CD8-positive, alpha-beta memory T cell (primary cell): ENCODE measurements at regions of chr7 and their contacts with region 1.

Region 1: DNA sequence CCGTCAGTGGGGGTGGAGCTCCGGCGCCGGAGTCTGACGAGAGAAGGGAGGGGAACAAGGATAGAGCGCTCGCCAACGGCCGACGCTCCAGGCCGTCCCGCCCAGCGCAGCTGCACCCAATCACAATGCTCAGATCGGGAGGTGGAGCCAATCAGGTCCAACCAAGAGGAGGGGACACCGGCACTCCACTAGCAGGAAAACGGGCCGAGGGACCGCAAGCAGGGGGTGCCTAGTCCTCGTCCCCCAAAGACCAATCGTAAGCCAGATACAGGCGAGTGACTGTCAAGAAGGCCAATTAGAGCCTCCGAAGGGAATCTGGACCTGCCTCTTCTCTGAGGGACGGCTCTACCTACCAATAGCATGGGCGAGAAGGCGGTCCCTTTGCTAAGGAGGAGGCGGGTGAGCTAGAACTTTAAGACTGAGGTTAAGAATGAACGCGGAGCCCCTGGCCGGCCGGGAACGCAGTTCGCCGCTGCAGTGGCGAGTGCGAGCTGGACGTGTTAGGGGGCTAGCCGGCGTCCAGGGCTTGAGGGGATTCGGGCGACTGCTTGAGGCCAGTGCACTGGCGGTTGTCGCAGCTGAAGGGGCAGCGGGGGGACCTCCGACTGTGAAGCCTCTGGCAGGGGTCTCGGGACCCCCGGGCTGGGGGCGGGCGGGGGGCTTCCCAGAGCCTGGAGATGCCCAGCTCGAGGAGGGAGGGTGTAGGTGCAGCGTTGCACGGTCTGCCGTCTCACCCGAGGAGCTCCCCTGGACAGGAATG is at the start of gene FBXO24:
- DNase-seq: peak; percentile 99 to 100 (median 99)
- H3K4me3 ChIP-seq: peak within 1 kb of the TSS; percentile 87
- H3K4me3 Mint-ChIP-seq: peak within 1 kb of the TSS; percentile 91 to 99 (median 98)
- H3K27ac ChIP-seq: peak within 1 kb of the TSS; percentile 92
- H3K27ac Mint-ChIP-seq: peak within 1 kb of the TSS; percentile 85 to 99 (median 95)
- H3K4me1 ChIP-seq: peaks cover 40% of the 10 kb centered on the region
- H3K4me1 Mint-ChIP-seq: peaks cover 30 to 53% (median 31%) of the 10 kb centered on the region in 3 donors
- H3K27me3 ChIP-seq: no peaks in the 10 kb centered on the region
- H3K27me3 Mint-ChIP-seq: peaks cover 6 to 8% of the 10 kb centered on the region in 2 donors
- total RNA-seq, gene FBXO24: 0.47 to 0.50 TPM

Region 2: DNA sequence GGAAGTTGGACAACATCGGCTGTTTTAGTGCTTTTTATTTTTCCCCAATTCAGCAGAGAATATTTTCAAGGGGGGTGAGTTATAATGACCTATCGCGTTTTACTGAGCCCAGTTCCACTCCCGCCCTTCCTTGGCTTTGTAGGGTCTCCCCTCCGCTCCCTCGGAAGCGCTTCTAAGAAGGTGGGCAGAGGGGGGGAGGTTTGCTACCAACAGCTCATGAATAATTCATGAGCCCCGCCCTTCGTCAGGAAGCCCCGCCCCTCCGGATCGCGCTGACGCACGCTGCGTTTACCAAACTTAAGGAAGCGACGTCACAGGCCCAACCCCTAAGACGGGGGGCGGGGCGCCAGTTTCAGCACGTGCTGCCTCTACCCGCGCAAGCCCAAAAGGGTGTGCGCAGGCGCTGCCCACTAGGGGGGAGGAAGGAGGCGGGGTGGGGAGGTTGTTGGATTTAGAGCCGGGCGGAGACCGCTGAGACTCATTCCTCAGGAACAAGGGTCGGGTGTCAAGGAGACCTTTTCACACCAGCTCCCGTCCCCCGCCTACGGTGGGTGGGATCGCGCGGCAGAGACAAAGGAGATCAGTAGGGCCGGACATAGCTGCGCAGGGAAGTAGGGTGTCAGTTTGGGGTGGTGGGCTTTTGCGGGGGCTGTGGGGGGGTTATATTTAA is 157.3 kb before region 1 on chr7:
- CTCF ChIA-PET with region 1: interaction called, 5 read pairs
- POLR2A ChIA-PET with region 1: interaction called, 27 read pairs
- DNase-seq: peak; percentile 100
- H3K4me3 ChIP-seq: peak overlapping the region; percentile 96
- H3K4me3 Mint-ChIP-seq: peak overlapping the region; percentile 96 to 100 (median 98)
- H3K27ac ChIP-seq: peak overlapping the region; percentile 100
- H3K27ac Mint-ChIP-seq: peak overlapping the region; percentile 94 to 100 (median 100)
- H3K4me1 ChIP-seq: peaks cover 34% of the 10 kb centered on the region
- H3K4me1 Mint-ChIP-seq: peaks cover 31 to 56% (median 35%) of the 10 kb centered on the region in 3 donors
- H3K27me3 ChIP-seq: no peaks in the 10 kb centered on the region
- H3K27me3 Mint-ChIP-seq: peaks cover 0 to 13% of the 10 kb centered on the region in 2 donors

Region 3: GRCh38 chr7:100469227-100470044 is 117.0 kb before region 1 on chr7:
- CTCF ChIA-PET with region 1: interaction called, 19 read pairs
- POLR2A ChIA-PET with region 1: no interaction called
- DNase-seq: peak; percentile 69 to 86 (median 80)
- H3K4me3 ChIP-seq: no peak overlapping the region
- H3K4me3 Mint-ChIP-seq: no peak overlapping the region
- H3K27ac ChIP-seq: no peak overlapping the region
- H3K27ac Mint-ChIP-seq: peak overlapping the region in 7 of 8 donors; percentile 64 to 83 (median 70)
- H3K4me1 ChIP-seq: peaks cover 24% of the 10 kb centered on the region
- H3K4me1 Mint-ChIP-seq: peaks cover 17 to 46% (median 31%) of the 10 kb centered on the region in 3 donors
- H3K27me3 ChIP-seq: no peaks in the 10 kb centered on the region
- H3K27me3 Mint-ChIP-seq: no peaks in the 10 kb centered on the region

Region 4: GRCh38 chr7:100563809-100564400 is 22.5 kb before region 1 on chr7:
- CTCF ChIA-PET with region 1: interaction called, 133 read pairs
- POLR2A ChIA-PET with region 1: interaction called, 10 read pairs
- DNase-seq: peak; percentile 68 to 88 (median 77)
- H3K4me3 ChIP-seq: no peak overlapping the region
- H3K4me3 Mint-ChIP-seq: no peak overlapping the region
- H3K27ac ChIP-seq: no peak overlapping the region
- H3K27ac Mint-ChIP-seq: peak overlapping the region in 4 of 8 donors; percentile 40 to 88 (median 66)
- H3K4me1 ChIP-seq: peaks cover 33% of the 10 kb centered on the region
- H3K4me1 Mint-ChIP-seq: peaks cover 18 to 35% (median 25%) of the 10 kb centered on the region in 3 donors
- H3K27me3 ChIP-seq: no peaks in the 10 kb centered on the region
- H3K27me3 Mint-ChIP-seq: peaks cover 0 to 1% of the 10 kb centered on the region in 2 donors

Region 5: DNA sequence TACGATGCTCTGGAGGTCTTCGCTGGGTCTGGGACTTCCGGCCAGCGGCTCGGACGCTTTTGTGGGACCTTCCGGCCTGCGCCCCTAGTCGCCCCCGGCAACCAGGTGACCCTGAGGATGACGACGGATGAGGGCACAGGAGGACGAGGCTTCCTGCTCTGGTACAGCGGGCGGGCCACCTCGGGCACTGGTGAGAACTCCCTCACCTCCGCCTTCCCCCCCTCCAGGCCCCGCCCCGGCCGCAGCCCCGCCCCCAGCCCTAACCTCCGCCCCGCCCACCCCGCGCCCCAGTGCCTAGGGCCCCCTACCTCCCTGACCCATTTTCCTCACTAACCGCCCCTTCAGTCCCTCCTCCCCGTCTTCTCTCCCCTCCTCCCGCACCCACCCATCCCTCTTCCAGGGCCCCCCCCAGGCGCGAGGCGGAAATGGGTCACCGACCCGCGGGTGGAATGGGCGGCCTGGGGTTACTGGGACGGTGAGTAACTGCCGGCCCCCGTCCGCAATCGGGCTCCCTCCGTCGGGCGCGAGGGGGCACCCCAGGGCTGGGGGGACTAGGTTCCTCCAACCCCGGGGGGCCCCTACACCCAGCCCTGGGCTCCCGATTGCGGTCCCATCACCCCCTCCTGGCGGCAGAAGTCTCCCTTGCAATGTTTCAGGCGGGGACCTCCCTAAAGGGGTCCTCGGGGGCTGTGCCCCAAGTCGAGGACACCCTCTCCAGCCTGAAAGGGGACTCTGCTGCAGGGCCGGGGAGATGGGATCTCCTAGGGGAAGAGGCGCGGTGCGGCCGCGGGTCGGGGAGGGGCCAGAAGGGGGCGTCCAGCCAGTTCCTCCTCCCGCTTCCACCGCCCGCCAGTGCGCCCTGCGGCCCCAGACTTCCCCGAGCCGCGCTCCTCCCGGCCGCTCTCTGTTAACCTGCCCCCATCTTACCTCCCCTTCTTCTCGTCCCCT is 17.9 kb after region 1 on chr7:
- CTCF ChIA-PET with region 1: interaction called, 8 read pairs
- POLR2A ChIA-PET with region 1: interaction called, 14 read pairs
- DNase-seq: peak; percentile 64 to 88 (median 76)
- H3K4me3 ChIP-seq: peak overlapping the region; percentile 55
- H3K4me3 Mint-ChIP-seq: peak overlapping the region; percentile 81 to 95 (median 87)
- H3K27ac ChIP-seq: peak overlapping the region; percentile 75
- H3K27ac Mint-ChIP-seq: peak overlapping the region; percentile 38 to 98 (median 94)
- H3K4me1 ChIP-seq: peaks cover 18% of the 10 kb centered on the region
- H3K4me1 Mint-ChIP-seq: peaks cover 11 to 30% (median 18%) of the 10 kb centered on the region in 3 donors
- H3K27me3 ChIP-seq: no peaks in the 10 kb centered on the region
- H3K27me3 Mint-ChIP-seq: no peaks in the 10 kb centered on the region

Region 6: GRCh38 chr7:100673300-100673941 is 87.0 kb after region 1 on chr7 and contains the start of gene GNB2:
- CTCF ChIA-PET with region 1: interaction called, 3 read pairs
- POLR2A ChIA-PET with region 1: interaction called, 13 read pairs
- DNase-seq: peak; percentile 93 to 98 (median 96)
- H3K4me3 ChIP-seq: peak within 1 kb of the TSS; percentile 84
- H3K4me3 Mint-ChIP-seq: peak within 1 kb of the TSS; percentile 92 to 98 (median 95)
- H3K27ac ChIP-seq: peak within 1 kb of the TSS; percentile 89
- H3K27ac Mint-ChIP-seq: peak within 1 kb of the TSS; percentile 95 to 98 (median 96)
- H3K4me1 ChIP-seq: peaks cover 15% of the 10 kb centered on the region
- H3K4me1 Mint-ChIP-seq: peaks cover 10 to 23% (median 12%) of the 10 kb centered on the region in 3 donors
- H3K27me3 ChIP-seq: no peaks in the 10 kb centered on the region
- H3K27me3 Mint-ChIP-seq: peaks cover 0 to 6% of the 10 kb centered on the region in 2 donors
- total RNA-seq, gene GNB2: 253 to 262 TPM

Region 7: GRCh38 chr7:100705753-100706671 is 119.6 kb after region 1 on chr7 and contains the start of gene POP7:
- CTCF ChIA-PET with region 1: interaction called, 20 read pairs
- POLR2A ChIA-PET with region 1: interaction called, 19 read pairs
- DNase-seq: peak; percentile 96 to 99 (median 98)
- H3K4me3 ChIP-seq: peak within 1 kb of the TSS; percentile 93
- H3K4me3 Mint-ChIP-seq: peak within 1 kb of the TSS; percentile 88 to 98 (median 96)
- H3K27ac ChIP-seq: peak within 1 kb of the TSS; percentile 81
- H3K27ac Mint-ChIP-seq: peak within 1 kb of the TSS; percentile 86 to 97 (median 94)
- H3K4me1 ChIP-seq: peaks cover 14% of the 10 kb centered on the region
- H3K4me1 Mint-ChIP-seq: peaks cover 12 to 19% (median 15%) of the 10 kb centered on the region in 3 donors
- H3K27me3 ChIP-seq: no peaks in the 10 kb centered on the region
- H3K27me3 Mint-ChIP-seq: peaks cover 2 to 3% of the 10 kb centered on the region in 2 donors
- total RNA-seq, gene POP7: 79.7 to 83.3 TPM

Region 8: DNA sequence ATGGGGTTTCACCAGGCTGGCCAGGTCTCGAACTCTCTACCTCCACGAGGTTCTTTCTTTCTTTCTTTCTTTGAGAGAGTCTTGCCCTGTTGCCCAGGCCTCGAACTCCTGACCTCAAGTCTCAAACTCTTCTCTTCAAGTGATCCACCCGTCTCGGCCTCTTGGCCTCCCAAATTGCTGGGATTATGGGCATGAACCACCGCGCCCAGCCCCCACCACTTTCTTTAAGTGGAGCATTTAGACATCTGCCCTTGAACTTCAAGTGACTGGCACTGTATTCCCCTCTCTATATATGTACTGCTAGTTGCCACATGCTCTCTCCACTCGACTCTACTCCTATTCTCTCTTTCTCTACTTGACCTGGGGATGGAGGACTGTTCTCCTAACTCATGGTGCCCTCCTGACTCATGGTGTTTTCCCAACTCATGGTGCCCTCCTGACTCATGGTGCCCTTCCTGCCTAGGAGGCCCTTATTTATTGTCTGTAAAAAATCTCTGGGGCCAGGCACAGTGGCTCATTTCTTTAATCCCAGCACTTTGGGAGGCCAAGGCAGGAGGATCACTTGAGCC is 328.5 kb after region 1 on chr7:
- CTCF ChIA-PET with region 1: no interaction called
- POLR2A ChIA-PET with region 1: no interaction called
- DNase-seq: no peak
- H3K4me3 ChIP-seq: no peak overlapping the region
- H3K4me3 Mint-ChIP-seq: no peak overlapping the region
- H3K27ac ChIP-seq: no peak overlapping the region
- H3K27ac Mint-ChIP-seq: no peak overlapping the region
- H3K4me1 ChIP-seq: no peaks in the 10 kb centered on the region
- H3K4me1 Mint-ChIP-seq: no peaks in the 10 kb centered on the region
- H3K27me3 ChIP-seq: no peaks in the 10 kb centered on the region
- H3K27me3 Mint-ChIP-seq: peaks cover 18 to 48% of the 10 kb centered on the region in 2 donors